Activated CD8-positive, alpha-beta T cell treated with anti-CD3 and anti-CD28 coated beads, Interleukin-2, amount 10 ng/mL, durations not matched to agents 7 days and 5 days (primary cell): ENCODE measurements at regions of chr3 and their contacts with region 1.

Region 1: GRCh38 chr3:105369500-105370371 is 3.0 kb downstream of the ALCAM start:
- DNase-seq: peak; percentile 56
- ATAC-seq: peak; percentile 27
- H3K4me3 Mint-ChIP-seq: peak overlapping the region; percentile 92
- H3K27ac Mint-ChIP-seq: peak overlapping the region; percentile 95
- H3K4me1 Mint-ChIP-seq: peaks cover 37% of the 10 kb centered on the region
- H3K27me3 Mint-ChIP-seq: peaks cover 17% of the 10 kb centered on the region

Region 2: DNA sequence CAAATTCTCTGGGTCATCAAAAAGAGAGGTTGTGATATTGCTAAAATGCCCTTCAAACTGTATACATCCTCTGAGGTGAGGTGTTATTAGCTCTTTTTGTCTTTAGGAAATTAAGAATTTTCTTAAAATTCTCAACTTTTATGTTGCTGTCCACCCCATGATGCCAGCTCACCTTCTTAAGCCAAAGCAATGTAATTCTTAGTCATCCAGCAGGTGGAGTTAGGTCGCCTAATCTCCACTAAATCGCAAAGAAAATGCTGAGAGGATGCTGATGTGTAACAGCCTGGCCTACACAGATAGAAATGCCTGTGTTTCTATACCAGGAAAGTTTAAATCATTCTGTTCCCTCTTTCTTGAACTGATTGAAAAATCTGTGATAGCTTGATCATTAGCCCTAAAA is 773.2 kb before region 1 on chr3:
- CTCF ChIA-PET with region 1: interaction called, 12 read pairs
- POLR2A ChIA-PET with region 1: no interaction called
- DNase-seq: no peak
- ATAC-seq: no peak
- H3K4me3 Mint-ChIP-seq: no peak overlapping the region
- H3K27ac Mint-ChIP-seq: no peak overlapping the region
- H3K4me1 Mint-ChIP-seq: no peaks in the 10 kb centered on the region
- H3K27me3 Mint-ChIP-seq: no peaks in the 10 kb centered on the region

Region 3: DNA sequence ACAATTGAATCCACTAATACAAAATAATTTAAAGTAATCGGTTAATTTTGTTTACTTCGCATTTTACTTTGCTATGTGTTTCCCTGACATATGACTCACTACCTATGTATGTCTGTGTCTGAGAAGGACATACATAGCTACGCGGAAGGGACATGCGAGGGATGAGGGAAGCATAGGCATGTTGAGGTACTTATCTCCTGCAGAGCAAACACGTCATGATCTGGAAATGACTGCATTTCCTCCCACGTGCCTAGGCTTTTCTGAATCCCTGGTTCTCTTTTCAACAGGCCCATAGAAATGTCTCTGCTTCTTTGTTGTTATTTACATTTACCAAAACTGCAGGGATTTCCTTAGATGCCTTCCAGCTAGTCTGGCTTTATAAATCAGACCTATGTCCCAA is 24.4 kb after region 1 on chr3:
- CTCF ChIA-PET with region 1: no interaction called
- POLR2A ChIA-PET with region 1: no interaction called
- DNase-seq: no peak
- ATAC-seq: no peak
- H3K4me3 Mint-ChIP-seq: no peak overlapping the region
- H3K27ac Mint-ChIP-seq: no peak overlapping the region
- H3K4me1 Mint-ChIP-seq: no peaks in the 10 kb centered on the region
- H3K27me3 Mint-ChIP-seq: no peaks in the 10 kb centered on the region

Region 4: DNA sequence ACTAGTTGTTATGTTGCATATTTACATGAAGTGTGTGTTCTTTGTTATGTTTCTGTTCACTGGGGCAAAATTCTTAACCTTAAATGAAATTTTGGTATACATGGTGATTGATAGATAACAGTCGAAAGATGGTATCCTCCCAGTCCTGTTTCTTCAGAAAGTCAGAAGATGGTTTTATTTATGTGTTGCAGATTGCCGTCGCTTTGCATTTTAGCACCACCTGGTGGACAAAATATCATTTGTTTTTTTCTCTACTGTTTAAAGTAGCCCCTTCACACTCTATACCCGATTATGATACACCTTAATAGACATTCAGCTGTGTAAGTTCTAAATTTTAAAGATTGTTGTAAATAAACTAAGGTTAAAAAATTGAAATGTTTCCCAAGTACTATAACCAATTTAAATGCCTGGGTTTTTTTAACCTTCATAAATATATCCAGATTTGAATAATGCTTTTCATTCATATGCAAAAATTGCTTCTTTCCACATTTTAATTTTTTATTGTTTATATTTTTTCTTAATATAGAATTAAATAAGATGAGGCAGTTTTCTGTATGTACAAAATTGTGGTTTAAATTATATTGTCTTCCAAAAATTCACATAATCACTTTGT is 149.2 kb after region 1 on chr3:
- CTCF ChIA-PET with region 1: interaction called, 11 read pairs
- POLR2A ChIA-PET with region 1: no interaction called
- DNase-seq: peak; percentile 44
- ATAC-seq: peak; percentile 69
- H3K4me3 Mint-ChIP-seq: no peak overlapping the region
- H3K27ac Mint-ChIP-seq: no peak overlapping the region
- H3K4me1 Mint-ChIP-seq: peaks cover 3% of the 10 kb centered on the region
- H3K27me3 Mint-ChIP-seq: no peaks in the 10 kb centered on the region